Heart left ventricle (tissue), 16 donors: ENCODE measurements at regions of chr6 and their contacts with region 1.

Region 1: DNA sequence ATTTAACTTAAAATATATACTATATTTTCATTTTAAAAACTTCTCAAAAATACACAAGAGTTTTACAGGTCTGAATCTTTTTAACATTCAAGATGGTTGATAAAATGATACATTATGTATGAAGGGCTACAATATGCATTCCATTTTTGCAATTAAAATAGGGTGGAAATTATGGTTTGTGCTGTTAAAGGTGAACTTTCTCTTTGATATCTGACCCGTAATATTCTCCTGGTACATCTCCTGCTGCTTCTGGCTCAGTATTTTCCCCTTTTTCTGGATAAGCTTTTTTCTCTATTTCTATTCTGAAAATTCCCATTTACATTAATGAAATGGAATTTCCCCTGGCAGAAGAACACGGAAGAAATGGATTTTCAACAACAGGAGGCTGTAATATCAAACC is 27.4 kb upstream of the LCA5 start:
- DNase-seq: no peak
- ATAC-seq: no peak
- H3K4me3 ChIP-seq: no peak overlapping the region
- H3K27ac ChIP-seq: no peak overlapping the region
- H3K4me1 ChIP-seq: no peaks in the 10 kb centered on the region
- H3K27me3 ChIP-seq: no peaks in the 10 kb centered on the region
- CTCF ChIP-seq: no peak
- POLR2A ChIP-seq: no peak

Region 2: DNA sequence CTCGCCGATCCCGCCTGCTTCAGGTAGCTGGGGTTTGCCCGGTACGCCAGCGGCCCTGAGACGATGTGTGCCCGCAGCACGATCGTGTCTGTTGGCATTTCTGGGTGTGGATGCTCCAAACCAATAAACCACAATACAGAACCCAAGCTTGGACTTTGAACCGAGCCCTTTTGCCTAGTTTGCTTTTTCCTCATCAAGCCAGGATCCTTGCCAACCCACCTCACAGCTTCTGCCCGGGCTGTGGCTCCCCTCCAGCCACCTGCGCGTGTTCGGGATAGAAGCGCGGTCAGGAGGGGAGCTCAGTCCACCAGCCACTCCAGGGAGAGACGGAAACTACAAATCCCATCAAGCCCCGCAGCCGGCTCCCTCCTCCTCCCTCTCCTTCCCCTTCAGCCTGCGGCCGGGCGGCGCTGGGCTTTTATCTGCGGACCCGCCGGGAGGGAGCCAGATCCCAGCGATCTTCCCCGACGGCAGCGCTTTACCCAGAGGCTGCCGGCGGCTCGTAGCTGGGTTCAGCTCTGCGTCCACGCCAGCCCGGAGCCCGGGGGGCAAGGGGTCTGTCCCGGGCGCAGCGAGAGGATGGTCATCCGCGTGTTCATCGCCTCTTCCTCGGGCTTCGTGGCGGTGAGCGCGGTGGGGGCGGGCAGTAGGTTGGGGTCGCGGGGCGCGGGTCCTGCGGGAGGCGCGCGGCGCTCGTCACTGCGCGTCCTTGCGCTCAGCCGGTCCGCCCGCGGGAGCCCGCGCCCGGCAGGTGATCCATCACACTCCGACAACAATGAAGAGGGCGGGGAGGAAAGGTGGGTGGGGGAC is 66.5 kb after region 1 on chr6 and contains the start of gene SH3BGRL2:
- intact Hi-C with region 1: loop called in 1 of 10 experiments (anchors 5 kb)
- DNase-seq: peak; percentile 66 to 84 (median 74)
- ATAC-seq: peak; percentile 88 to 97 (median 96)
- H3K4me3 ChIP-seq: peak within 1 kb of the TSS; percentile 53 to 97 (median 84)
- H3K27ac ChIP-seq: peak within 1 kb of the TSS in 10 of 12 donors; percentile 35 to 86 (median 74)
- H3K4me1 ChIP-seq: peaks cover 0 to 26% (median 6%) of the 10 kb centered on the region in 12 donors
- H3K27me3 ChIP-seq: peaks cover 0 to 16% (median 0%) of the 10 kb centered on the region in 9 donors
- CTCF ChIP-seq: no peak
- POLR2A ChIP-seq: peak in 1 of 2 donors; percentile 49
- total RNA-seq, gene SH3BGRL2: 4.4 to 14.1 (median 5.6) TPM

Region 3: GRCh38 chr6:79672631-79673111 is 108.0 kb after region 1 on chr6:
- intact Hi-C with region 1: loop called in 1 of 10 experiments (anchors 5 kb)
- DNase-seq: no peak
- ATAC-seq: no peak
- H3K4me3 ChIP-seq: no peak overlapping the region
- H3K27ac ChIP-seq: peak overlapping the region in 3 of 12 donors; percentile 21 to 55 (median 25)
- H3K4me1 ChIP-seq: peaks cover 0 to 21% (median 8%) of the 10 kb centered on the region in 12 donors
- H3K27me3 ChIP-seq: no peaks in the 10 kb centered on the region
- CTCF ChIP-seq: peak; percentile 6 to 61 (median 41)
- POLR2A ChIP-seq: no peak

Region 4: DNA sequence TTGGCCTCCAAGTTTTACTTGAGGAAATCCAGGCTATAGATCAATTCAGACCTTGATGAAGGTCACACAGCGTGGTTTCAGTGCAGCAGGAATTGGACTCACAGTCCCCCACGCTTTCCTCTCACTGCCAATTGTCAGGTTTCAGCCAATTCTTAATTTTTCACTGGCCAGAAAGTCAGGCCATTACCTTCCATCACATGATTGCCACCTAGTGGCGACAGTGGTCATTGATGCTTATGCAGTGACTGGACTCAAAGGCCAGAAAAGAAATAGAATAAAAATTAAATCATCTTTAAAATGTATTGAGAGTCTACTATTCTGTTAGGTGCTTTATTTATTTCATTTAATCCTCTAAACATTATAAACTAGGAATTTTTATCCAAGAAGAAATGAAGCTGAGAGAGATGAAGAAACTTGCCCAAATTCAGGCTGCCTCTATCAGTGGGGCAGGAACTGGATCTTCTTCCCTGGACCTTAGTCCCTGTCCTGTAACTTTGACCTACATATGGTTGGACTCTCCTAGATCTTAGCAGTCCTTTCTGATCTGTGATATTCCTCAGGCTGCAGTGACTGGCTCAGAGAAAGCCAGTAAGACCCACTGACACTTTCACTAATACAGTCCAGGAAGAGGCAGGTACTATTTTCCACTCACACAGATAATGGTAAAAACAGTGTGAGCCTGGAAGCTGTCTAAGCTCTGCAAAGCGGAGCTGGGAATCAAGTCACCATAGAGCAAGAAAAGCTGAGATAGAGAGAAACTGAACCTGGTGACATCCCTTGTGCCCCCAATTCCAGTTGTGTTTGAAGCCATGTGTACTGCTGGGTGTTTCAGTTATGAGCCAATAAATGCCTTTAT is 249.4 kb after region 1 on chr6:
- intact Hi-C with region 1: loop called in 1 of 10 experiments (anchors 10 kb)
- DNase-seq: peak; percentile 51 to 73 (median 56)
- ATAC-seq: peak in 3 of 4 donors; percentile 54 to 72 (median 59)
- H3K4me3 ChIP-seq: no peak overlapping the region
- H3K27ac ChIP-seq: no peak overlapping the region
- H3K4me1 ChIP-seq: no peaks in the 10 kb centered on the region
- H3K27me3 ChIP-seq: no peaks in the 10 kb centered on the region
- CTCF ChIP-seq: peak; percentile 71 to 91 (median 86)
- POLR2A ChIP-seq: no peak